MCF 10A (cell line): ENCODE measurements at regions of chr2 and their contacts with region 1.

Region 1: DNA sequence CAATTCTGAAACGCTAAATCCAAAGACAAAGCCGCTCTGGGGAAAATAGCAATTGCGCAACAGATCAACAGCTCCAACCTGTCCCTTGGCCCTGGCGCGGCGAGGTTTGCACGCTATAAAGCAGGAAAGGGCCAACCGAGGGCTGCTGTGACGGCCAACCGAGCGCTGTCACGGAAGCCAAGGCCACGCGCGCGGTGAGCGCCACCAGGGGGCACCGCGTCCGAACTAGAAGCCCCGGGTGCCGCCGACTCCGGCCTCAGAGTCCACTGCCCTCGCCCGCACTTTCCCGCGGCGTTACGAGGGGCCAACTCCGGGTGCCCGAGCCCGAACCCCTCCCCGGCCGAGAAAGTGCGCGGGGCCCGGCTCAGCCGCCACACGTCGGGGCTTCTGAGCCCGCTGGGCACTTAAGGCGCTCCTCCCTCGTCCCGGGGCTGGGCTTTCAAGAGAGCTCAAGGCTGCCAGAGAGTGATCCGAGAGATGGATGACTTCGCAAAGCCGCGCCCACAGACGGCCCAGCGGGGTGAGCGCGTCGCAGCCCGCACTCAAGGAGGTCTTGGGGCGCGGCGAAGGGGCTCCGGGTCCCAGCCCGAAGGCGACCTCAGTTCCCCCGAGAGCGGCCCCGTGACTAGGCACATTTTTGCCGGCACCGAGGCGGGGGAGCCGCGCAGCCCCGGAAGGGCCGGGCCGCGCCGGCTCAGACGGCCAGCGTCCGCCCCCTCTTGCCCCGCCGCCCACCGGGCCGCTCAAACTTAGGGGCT is 897 bp downstream of the NFE2L2 start:
- DNase-seq: peak; percentile 99
- H3K4me3 Mint-ChIP-seq: peak overlapping the region; percentile 89
- H3K27ac Mint-ChIP-seq: peak overlapping the region; percentile 90
- H3K4me1 Mint-ChIP-seq: peaks cover 28% of the 10 kb centered on the region
- H3K27me3 Mint-ChIP-seq: no peaks in the 10 kb centered on the region
- CTCF ChIP-seq: peak; percentile 84

Region 2: GRCh38 chr2:177169810-177170514 is 93.7 kb before region 1 on chr2:
- CTCF ChIA-PET with region 1: interaction called, 43 read pairs
- POLR2A ChIA-PET with region 1: interaction called, 198 read pairs
- intact Hi-C with region 1: loop called (anchors 1 kb)
- DNase-seq: peak; percentile 95
- H3K4me3 Mint-ChIP-seq: peak overlapping the region; percentile 3
- H3K27ac Mint-ChIP-seq: peak overlapping the region; percentile 91
- H3K4me1 Mint-ChIP-seq: peaks cover 28% of the 10 kb centered on the region
- H3K27me3 Mint-ChIP-seq: no peaks in the 10 kb centered on the region
- CTCF ChIP-seq: no peak

Region 3: DNA sequence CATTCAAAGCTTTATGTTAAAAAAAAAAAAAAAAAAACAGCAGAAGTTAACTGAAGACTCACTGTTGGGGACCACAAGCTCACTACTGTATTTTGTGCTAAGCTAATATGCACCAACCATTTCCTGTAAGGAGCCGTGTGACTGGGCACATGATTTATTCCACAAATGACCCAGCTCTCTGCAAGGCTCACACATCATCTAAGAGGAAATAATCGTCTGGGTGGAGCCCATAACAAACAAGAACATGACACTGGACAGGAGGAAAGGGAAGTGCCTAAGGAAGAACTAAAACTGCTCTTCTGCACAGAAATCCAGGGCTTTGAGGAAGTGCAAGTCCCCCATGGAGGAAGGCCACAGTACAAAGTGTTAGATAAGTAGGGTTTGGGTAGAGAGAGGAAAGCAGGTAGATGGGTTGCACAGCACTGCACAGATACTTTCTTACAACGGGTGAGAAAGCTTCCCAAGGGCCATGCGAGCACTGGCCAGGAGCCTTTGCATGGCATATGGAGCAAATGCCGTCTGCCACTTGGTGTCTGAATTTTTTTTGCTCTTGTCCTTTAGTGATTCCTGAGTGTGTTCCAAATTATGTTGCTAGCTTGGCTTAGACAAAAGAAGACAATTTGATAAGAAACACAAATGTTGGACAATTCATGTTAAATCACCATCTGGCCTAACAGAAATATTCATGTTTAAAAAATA is 23.5 kb before region 1 on chr2:
- CTCF ChIA-PET with region 1: interaction called, 29 read pairs
- POLR2A ChIA-PET with region 1: interaction called, 49 read pairs
- intact Hi-C with region 1: loop called (anchors 1 kb)
- DNase-seq: peak; percentile 28
- H3K4me3 Mint-ChIP-seq: peak overlapping the region; percentile 30
- H3K27ac Mint-ChIP-seq: peak overlapping the region; percentile 97
- H3K4me1 Mint-ChIP-seq: peaks cover 53% of the 10 kb centered on the region
- H3K27me3 Mint-ChIP-seq: no peaks in the 10 kb centered on the region
- CTCF ChIP-seq: no peak

Region 4: GRCh38 chr2:177289824-177290628 is 26.4 kb after region 1 on chr2:
- CTCF ChIA-PET with region 1: interaction called, 36 read pairs
- POLR2A ChIA-PET with region 1: interaction called, 77 read pairs
- intact Hi-C with region 1: no loop called
- DNase-seq: no peak
- H3K4me3 Mint-ChIP-seq: no peak overlapping the region
- H3K27ac Mint-ChIP-seq: no peak overlapping the region
- H3K4me1 Mint-ChIP-seq: peaks cover 3% of the 10 kb centered on the region
- H3K27me3 Mint-ChIP-seq: no peaks in the 10 kb centered on the region
- CTCF ChIP-seq: no peak

Region 5: GRCh38 chr2:177314194-177314593 is 50.6 kb after region 1 on chr2:
- CTCF ChIA-PET with region 1: interaction called, 30 read pairs
- POLR2A ChIA-PET with region 1: interaction called, 198 read pairs
- intact Hi-C with region 1: no loop called
- DNase-seq: peak; percentile 67
- H3K4me3 Mint-ChIP-seq: no peak overlapping the region
- H3K27ac Mint-ChIP-seq: peak overlapping the region; percentile 95
- H3K4me1 Mint-ChIP-seq: peaks cover 30% of the 10 kb centered on the region
- H3K27me3 Mint-ChIP-seq: no peaks in the 10 kb centered on the region
- CTCF ChIP-seq: no peak

Region 6: DNA sequence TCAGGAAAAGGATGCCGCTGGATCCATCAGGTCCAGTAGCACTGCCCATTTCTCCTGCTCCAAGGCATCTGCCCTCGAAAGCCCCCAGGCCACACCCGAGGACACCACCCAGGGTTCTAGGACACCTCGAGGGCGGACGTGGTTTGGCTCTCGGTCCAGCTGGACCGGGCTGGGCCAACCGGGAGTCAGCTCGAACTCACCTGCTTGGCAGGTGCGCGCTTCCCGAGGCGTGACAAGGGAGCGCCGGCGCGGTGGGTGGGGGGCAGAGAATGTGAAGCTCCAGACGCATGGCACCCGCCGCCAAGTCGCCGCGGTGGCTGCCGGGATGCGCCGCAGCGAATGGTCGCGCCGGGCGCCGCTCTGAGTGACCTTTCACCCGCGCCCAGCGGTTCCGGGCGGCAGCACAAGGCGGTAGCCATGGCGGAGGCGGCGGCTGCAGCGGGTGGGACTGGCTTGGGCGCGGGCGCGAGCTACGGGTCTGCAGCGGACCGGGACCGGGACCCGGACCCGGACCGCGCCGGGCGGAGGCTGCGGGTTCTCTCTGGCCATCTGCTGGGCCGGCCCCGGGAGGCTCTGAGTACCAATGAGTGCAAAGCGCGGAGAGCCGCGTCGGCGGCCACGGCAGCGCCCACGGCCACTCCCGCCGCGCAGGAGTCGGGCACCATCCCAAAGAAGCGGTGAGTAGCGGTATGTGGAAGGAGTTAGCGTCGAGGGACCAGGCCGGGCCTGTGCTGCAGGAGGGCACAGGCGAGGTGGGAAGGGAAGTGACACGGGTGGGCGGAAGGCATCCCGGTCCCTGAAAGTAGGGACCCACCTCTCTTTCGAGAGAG is 129.0 kb after region 1 on chr2 and contains the start of gene AGPS:
- CTCF ChIA-PET with region 1: no interaction called
- POLR2A ChIA-PET with region 1: interaction called, 28 read pairs
- intact Hi-C with region 1: no loop called
- DNase-seq: peak; percentile 71
- H3K4me3 Mint-ChIP-seq: peak within 1 kb of the TSS; percentile 96
- H3K27ac Mint-ChIP-seq: peak within 1 kb of the TSS; percentile 97
- H3K4me1 Mint-ChIP-seq: peaks cover 48% of the 10 kb centered on the region
- H3K27me3 Mint-ChIP-seq: no peaks in the 10 kb centered on the region
- CTCF ChIP-seq: peak; percentile 14
- total RNA-seq, gene AGPS: 49.5 and 50.5 TPM in 2 replicates